ENCODE measurements at regions of chr18 and their contacts with region 1.

Region 1: DNA sequence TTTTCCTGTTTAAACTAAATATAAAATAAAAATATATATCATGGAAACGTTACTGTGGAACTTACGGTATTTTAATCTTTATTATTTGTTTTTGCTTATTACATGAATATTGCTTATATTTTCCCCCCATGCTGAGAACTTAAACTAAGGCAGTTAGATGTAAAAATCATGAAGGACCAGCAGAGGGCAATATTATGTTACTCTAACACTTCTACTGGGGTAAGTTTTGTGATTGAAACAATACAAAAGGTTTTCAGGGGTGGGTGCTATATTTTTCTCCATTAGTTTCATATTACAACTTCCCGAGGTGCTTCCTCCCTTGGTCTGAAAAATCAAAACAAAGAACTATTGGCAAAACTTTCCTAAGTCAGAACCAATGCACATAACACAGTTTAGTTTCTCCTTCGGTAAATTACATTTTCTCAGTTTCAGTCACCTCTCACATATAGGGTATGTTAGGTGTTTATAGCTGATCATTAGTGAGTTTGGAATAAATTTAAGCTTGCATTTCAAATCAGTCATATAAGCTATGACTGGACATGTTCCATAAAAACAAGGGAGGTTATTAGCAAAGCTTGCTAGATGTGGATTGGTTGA is 54.8 kb downstream of the ZNF407 start:
- DNase-seq: no peak
- ATAC-seq: no peak

Region 2: DNA sequence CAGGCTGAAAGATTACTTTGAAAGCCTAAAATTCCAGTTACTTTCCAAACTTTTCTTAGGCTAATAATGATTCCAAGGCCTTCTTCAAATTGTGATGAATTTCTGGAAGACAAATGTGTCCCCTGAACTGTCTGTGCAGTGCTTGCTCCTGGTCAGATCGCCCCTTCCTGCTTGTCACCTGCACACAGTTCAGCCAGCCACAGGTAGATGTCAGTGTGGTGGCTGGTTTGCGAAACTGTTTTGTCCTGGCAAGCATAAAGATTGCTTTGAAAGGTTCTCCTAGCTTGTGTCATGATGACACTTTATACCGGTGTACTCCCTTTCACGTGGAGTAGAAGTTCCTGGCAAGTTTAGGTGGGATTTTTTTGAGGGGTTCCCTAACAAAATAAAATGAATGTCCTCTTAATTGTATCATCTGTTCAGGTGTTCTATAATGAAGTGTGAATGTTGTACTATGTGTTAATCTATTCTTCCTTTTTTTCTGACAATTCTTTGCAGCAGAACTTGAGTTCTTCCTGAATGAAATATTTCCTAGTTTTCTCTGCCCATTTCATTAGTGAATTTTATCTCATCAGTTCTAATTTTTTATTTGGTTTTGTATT is 244.0 kb after region 1 on chr18:
- intact Hi-C with region 1: loop called (anchors 10 kb)
- DNase-seq: no peak
- ATAC-seq: peak; percentile 52

Region 3: GRCh38 chr18:74963820-74964446 is 311.4 kb after region 1 on chr18:
- intact Hi-C with region 1: loop called (anchors 5 kb)
- DNase-seq: no peak
- ATAC-seq: peak; percentile 72

Region 4: DNA sequence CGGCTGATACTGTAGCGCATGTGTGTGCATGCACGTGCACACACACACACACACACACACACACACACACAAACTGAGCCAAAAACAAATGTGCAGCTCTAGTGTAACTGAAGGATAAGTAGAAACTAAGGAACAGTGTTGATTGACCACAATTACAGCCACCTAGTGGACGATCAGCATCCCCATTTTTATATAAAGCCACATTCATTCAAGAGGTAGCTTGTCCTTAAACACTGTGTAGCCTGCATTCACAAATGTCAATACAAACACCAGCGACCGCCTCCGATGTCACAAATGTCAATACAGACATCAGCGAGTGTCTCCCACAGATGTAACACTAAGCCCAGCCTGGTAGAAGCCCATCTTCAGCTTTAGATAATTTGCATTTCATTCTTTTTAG is 389.1 kb after region 1 on chr18:
- intact Hi-C with region 1: loop called (anchors 10 kb)
- DNase-seq: no peak
- ATAC-seq: no peak

Region 5: DNA sequence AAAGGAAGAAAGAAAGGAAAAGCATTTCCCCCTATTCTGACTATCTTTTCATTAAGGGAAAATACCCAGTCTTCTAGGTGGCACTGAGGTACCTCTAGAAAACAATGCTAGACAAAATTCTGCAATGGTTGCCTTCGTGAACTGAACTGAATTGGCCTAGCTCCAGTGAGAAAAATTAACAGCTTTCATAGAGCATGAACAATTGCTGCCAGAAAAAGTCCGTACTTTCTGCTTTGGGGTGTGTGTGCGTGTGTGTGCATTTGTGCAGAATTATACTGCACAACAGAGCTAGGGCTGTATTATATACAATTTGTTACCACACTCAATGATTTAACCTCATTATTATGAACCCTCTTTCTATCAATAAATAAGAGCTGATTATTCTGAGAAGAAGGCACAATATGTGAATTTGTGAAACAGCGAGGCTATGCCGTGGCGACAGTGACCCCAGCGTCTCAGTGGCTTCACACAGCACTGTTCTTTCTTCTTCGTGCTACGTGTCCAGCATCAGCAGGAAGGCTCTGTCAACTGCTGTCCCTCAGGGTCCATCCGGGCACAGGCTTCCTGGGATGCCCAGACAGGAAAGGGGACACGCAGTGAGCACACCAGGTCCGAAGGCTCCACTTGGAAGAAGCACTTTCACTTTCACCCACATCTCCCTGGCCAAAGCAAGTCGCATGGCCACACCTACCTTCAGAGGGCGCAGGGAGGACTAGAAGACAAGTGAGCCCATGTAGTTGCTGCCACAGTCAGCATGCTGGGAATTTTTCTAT is 509.0 kb after region 1 on chr18:
- intact Hi-C with region 1: loop called (anchors 5 kb)
- DNase-seq: no peak
- ATAC-seq: peak; percentile 54

Region 6: DNA sequence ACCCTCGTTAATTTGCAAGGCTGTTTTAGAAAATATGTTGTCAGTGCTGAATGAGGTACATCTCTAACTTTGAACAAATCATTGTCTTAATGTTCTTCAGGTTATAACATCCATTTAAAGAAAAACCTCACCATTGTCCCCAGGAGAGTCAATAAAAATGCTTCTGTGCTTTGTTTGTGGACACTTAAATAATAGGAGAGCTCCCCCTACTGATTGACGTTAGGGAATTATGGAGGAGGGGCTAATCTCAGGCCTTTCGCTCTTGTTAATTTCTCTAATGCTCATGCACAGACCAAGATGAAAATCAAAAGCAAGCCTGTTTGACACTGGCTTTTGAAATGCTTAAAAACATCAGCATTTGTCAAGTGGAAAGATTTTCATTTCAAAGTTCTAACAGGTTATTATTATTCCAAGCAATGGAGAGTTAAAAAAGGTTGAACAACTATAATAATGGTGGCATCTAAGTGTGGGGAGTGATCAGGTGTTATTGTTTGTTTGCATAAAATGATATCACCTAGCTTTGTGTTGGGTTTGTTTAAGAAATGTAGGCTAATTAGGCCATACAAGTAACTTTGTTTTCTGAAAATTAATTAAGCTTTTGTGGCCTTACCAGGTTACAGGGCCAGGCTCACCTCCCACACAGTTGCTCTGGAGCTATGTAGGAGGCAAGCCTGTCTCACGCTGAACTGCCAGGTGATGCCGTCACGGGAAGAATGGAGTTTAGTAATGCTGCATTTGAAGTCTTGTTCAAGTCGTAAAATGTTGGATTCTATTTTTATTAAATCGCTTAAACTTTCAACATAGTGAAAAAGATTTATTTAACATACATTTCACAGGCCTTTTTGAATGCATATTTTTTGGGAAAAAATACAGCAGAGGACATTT is 826.7 kb after region 1 on chr18:
- intact Hi-C with region 1: loop called (anchors 2 kb)
- DNase-seq: no peak
- ATAC-seq: peak; percentile 68

Region 7: DNA sequence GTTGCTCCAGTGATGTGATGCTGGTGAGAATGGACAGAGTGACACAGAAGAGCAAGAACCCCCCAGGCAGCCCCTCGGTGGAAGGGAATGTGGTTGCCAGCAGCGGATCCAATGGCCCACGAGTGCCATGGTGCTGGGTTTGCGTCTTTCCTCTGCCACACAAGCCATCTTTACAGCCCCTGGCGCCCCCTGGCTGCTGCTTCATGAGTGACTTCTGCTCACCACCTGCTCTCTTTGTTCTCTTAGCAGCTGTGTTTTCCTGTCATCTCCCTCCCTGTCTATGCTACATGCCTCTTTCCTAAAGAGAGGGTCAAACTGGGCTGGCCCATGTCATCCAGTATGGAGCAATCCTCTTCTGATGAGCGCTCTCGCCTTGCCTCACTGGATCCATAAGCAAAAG is 1075.0 kb after region 1 on chr18:
- intact Hi-C with region 1: loop called (anchors 10 kb)
- DNase-seq: peak; percentile 84
- ATAC-seq: no peak